Activated T-helper 2 cell treated with anti-CD3 and anti-CD28 coated beads, Interferon-gamma antibody, Interleukin-2, Interleukin-4, amounts not matched to agents 10 μg/mL and 5 μg/mL and 100 μg/mL, durations not matched to agents 14 hours and 24 hours and 36 hours (primary cell): ENCODE measurements at regions of chr14 and their contacts with region 1.

Region 1: DNA sequence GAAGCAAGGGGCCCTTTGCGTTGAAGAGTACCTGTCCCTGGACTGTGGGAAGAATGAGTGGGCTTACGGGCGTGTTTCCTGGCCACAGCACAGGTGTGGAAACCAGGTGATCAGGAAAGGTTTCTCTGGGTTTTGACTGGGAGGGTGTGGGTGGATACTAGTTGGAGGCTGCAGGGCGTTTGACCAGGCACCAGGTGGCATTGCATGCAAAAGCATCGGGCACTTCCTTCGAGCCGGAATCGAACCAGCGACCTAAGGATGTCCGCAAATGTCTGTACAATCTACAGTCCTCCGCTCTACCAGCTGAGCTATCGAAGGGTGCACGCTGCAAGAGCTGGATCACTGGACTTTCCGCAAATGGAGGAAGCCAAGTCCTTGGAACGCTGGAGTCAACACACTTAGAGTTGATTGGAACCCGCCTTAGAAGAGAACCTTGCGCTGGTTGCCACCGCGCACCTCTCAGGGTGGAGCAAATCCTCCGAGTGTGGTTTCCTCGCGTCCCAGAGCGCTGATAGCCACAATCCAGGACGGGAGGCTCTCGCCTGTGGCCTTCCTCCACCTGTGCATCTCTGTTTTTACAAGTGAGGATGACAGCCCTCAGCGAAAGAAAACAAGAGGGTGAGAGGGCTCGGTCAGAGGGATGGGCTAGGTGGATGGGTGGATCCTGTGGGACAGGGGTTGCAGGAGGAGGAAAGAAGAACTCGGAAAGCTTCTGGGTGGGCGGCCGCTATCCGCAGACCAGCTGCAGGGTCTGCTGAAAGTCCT is 21.2 kb upstream of the RNASE4 start:
- DNase-seq: peak; percentile 77
- H3K4me3 Mint-ChIP-seq: peak overlapping the region; percentile 80
- H3K27ac Mint-ChIP-seq: no peak overlapping the region
- H3K4me1 Mint-ChIP-seq: peaks cover 36% of the 10 kb centered on the region
- H3K27me3 Mint-ChIP-seq: peaks cover 9% of the 10 kb centered on the region

Region 2: DNA sequence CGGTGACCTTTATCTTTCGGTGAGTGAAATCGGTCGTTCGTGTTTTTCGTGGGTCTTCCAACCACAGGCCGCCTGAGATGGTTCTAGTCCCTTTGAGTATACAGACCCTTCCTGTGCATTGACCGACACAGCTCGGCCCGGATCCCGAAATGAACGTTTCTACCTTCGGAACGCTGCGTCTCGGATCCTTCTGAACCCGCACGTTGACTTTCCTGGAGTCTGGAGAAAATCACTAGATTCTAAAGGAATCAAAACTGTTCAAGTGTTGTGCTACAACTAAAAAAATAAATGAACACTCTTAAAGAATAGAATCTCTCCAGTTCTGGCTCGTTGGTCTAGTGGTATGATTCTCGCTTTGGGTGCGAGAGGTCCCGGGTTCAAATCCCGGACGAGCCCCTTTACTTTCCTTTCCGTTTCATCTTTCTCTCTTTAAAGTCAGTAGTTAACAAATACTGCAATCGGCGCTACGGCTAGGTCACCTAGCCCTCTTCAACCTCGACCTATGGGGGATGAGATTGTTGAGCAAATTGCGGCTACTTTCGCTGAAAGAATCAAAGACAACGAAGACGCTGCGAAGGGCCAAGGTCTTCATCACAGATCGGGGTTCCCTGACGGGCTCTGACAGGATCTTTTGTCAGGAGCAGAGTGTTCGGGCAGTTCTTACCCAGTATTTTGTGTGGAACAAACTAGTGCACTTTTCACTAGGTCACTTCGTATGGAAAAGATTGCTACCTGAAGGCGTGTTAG is 30.3 kb before region 1 on chr14:
- intact Hi-C with region 1: loop called (anchors 5 kb)
- DNase-seq: peak; percentile 63
- H3K4me3 Mint-ChIP-seq: peak overlapping the region; percentile 75
- H3K27ac Mint-ChIP-seq: peak overlapping the region; percentile 72
- H3K4me1 Mint-ChIP-seq: peaks cover 35% of the 10 kb centered on the region
- H3K27me3 Mint-ChIP-seq: peaks cover 63% of the 10 kb centered on the region

Region 3: GRCh38 chr14:20690848-20691523 is 27.8 kb after region 1 on chr14:
- intact Hi-C with region 1: loop called (anchors 1 kb)
- DNase-seq: peak; percentile 33
- H3K4me3 Mint-ChIP-seq: no peak overlapping the region
- H3K27ac Mint-ChIP-seq: no peak overlapping the region
- H3K4me1 Mint-ChIP-seq: peaks cover 30% of the 10 kb centered on the region
- H3K27me3 Mint-ChIP-seq: peaks cover 2% of the 10 kb centered on the region